HEK293 (cell line): ENCODE measurements at regions of chr12 and their contacts with region 1.

Region 1: DNA sequence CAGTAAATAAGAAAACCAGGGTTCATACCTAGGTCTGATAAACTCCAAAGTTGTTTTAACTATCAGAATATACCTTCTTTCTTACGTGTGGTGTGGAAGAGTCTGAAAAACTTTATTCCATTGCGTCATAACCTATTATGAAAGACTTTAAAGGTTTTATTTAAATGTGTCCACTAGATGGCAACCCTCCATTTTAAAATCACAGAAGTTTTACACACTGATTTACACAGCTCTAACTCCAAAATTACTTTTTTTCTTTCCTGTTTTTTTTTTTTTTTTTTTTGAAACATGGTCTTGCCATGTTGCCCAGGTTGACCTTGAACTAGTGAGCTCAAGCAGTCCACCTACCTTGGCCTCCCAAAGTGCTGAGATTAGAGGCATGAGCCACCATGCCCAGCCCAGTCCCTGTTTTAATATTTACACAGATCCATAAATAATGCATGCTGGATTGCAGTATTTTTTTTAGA is 17.3 kb upstream of the TMPRSS12 start:
- H3K4me3 ChIP-seq: no peak overlapping the region
- H3K27ac ChIP-seq: no peak overlapping the region
- H3K4me1 ChIP-seq: no peaks in the 10 kb centered on the region
- CTCF ChIP-seq: peak; percentile 60; the same call in 1 of the 2 replicates

Region 2: DNA sequence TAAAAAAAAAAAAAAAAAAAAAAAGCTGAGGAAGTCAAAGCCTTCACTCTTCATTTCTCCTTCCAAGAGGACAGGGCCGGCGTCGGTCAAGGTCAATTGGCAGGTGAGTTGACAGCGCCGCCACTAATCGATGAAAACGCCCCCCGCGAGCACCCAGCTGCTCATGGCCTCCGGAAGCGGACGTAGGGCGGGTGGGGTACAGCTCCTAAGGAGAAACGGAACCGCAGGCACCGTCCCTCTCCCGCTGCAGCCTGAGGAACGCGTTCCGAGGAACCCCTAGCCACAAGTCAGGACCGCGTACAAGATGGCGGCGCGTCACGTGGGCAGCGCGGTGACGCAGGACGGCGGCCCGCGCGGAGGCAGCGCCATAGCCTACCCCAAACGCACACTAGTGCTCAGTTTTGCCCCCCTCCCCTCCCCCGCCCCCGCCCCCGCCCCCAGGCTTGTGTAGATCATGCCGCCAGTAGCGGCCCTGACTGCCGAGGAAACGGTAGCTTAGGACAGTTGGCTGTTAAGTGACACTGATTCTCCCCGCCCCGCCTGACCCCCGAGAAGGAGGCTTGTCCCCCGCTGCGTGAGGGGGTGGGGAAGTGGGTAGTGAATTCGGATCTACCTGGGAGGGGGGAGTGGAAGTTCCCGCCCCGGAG is 61.6 kb before region 1 on chr12 and contains the start of gene ATF1:
- CTCF ChIA-PET with region 1: interaction called, 14 read pairs
- POLR2A ChIA-PET with region 1: no interaction called
- H3K4me3 ChIP-seq: peak within 1 kb of the TSS; percentile 93
- H3K27ac ChIP-seq: peak within 1 kb of the TSS; percentile 94
- H3K4me1 ChIP-seq: peaks cover 10% of the 10 kb centered on the region; the same call in 1 of the 2 replicates
- CTCF ChIP-seq: 0 out of 2 replicates have a peak, but pooled peaks have one; percentile 22

Region 3: GRCh38 chr12:50986966-50987737 is 161.7 kb after region 1 on chr12:
- CTCF ChIA-PET with region 1: interaction called, 55 read pairs
- POLR2A ChIA-PET with region 1: no interaction called
- H3K4me3 ChIP-seq: no peak overlapping the region
- H3K27ac ChIP-seq: no peak overlapping the region; the same call in 1 of the 2 replicates
- H3K4me1 ChIP-seq: no peaks in the 10 kb centered on the region
- CTCF ChIP-seq: peak; percentile 58

Region 4: DNA sequence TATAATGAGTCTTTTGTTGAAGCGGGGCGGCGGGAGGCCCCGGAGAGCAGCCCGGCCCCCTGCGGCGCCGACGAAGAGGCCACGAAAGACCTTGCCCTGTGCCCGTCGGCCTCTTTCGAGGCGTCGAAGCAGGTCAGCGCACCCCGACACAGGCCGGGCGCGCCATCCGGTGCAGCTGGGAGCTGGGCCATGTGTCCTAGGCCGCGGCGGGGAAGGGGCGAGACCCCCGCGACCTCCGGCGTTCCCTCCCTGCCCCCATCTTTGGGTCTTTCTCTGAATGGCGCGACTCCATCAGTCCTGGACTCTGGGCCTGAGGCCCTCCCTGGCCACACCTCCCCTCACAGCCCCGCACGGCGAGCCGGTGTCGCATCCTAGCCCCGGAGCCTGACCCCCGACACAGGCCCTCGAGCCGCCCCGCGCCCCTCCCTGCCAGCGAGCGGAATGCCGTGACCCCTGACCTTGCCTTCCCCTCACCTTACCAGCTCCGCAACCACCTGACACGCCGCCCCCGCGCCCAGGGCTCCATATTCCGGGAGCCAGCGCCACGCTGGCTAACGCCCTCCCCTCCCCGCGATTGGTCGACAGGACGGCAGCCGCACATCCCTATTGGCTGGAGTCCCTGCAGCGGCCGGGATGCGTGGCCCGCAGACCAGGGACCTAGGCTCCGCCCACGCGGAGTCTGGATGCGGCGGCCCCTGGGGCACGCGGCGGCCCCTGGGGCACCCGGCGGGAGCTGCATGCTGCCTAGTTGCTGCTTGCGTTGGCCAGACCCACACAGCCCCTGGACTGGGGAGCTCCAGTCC is 200.6 kb after region 1 on chr12 and contains the start of gene SLC11A2:
- CTCF ChIA-PET with region 1: interaction called, 29 read pairs
- POLR2A ChIA-PET with region 1: interaction called, 3 read pairs
- H3K4me3 ChIP-seq: peak within 1 kb of the TSS; percentile 78
- H3K27ac ChIP-seq: peak within 1 kb of the TSS; percentile 95
- H3K4me1 ChIP-seq: 0 out of 2 replicates have a peak, but pooled peaks cover 4% of the 10 kb centered on the region
- CTCF ChIP-seq: 0 out of 2 replicates have a peak, but pooled peaks have one; percentile 42

Region 5: GRCh38 chr12:51246254-51246853 is 420.9 kb after region 1 on chr12:
- CTCF ChIA-PET with region 1: interaction called, 10 read pairs
- POLR2A ChIA-PET with region 1: no interaction called
- H3K4me3 ChIP-seq: no peak overlapping the region
- H3K27ac ChIP-seq: no peak overlapping the region
- H3K4me1 ChIP-seq: no peaks in the 10 kb centered on the region
- CTCF ChIP-seq: peak; percentile 64; the same call in 1 of the 2 replicates